Heart right ventricle (tissue), 16 donors: ENCODE measurements at regions of chr17 and their contacts with region 1.

Region 1: DNA sequence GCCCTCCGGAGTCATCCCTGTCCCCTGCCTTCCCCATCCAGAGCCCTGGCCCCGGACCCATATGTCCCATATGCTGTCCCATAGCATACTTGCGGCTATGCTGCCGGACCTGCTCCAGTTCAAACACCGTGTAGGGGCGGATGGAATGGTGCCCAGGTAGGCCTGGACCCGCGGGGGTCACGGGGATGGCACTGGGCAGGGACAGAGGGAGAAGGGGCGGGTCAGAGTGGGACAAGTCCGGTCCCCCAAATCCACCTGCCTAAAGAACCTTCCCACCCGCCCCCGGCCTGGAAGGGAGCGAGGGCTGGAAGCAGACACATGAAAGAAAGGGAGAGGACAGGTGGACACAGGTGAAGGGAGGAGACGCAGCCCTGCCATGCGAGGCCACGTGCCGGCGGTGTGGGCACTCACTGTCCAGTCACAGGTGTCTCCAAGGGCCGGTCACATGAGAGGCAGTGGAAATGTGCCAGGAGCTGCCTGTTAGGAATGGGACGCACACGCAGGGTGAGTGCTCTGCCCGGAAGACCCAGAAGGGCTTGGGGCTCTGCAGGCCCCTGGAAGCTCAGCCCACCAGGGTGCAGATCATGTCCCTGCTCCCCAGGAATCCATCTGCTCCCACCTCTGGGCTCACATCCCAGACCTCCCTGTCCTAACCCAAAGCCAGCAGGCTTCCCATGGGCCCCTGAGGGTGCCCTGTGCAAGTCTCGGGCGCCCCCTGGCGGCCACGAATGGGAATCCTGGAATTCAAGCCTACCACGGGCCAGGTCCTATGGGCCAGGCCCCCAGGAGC is 14.0 kb downstream of the UBALD2 start:
- DNase-seq: peak; percentile 86 to 90
- ATAC-seq: peak; percentile 84 to 96 (median 92)
- H3K4me3 ChIP-seq: peak overlapping the region in 1 of 10 donors; percentile 19
- H3K27ac ChIP-seq: no peak overlapping the region
- H3K4me1 ChIP-seq: peaks cover 0 to 24% (median 8%) of the 10 kb centered on the region in 9 donors
- H3K27me3 ChIP-seq: no peaks in the 10 kb centered on the region
- CTCF ChIP-seq: peak; percentile 96 to 99 (median 99)

Region 2: DNA sequence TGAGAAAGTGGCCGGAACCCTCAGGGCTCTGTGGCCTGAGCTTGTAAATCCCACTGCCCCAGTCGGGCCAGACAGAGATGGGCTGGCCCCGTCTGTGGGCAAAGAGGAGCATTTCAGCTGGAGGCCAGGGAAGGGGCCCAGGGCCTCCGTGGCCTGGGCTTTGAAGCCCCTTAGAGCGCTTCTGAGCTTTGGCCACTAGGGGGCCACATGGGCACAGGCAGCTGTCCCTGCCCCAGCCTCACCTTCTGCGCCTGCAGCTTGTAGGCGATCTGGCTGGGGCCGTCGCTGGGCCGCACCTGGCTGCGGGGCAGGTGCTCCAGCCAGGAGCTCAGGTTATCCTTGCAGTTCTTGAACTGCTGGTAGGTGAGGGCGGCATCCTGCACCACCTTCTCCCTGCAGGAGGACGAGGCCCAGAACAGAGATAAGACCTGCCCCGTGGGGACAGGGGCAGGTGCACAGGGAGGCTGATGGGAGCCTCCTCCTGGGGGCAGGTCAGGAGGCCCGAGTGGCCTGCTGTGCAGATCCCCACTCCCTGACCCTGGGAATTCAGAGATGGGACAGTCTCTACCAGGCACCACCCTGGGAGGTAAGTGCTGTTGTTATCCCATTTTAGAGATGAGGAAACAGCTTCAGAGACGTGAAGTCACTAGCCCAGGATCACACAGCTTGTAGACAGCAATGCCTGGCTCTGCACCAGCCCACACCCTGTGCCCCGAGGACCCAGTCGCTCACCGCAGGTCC is 264.8 kb before region 1 on chr17:
- intact Hi-C with region 1: loop called in 1 of 10 experiments (anchors 10 kb)
- DNase-seq: peak; percentile 54 to 68
- ATAC-seq: peak; percentile 65 to 88 (median 82)
- H3K4me3 ChIP-seq: no peak overlapping the region
- H3K27ac ChIP-seq: no peak overlapping the region
- H3K4me1 ChIP-seq: peaks cover 0 to 6% (median 4%) of the 10 kb centered on the region in 9 donors
- H3K27me3 ChIP-seq: peaks cover 0 to 12% (median 0%) of the 10 kb centered on the region in 7 donors
- CTCF ChIP-seq: peak; percentile 89 to 98 (median 95)

Region 3: GRCh38 chr17:76121932-76122430 is 157.2 kb before region 1 on chr17:
- intact Hi-C with region 1: loop called (anchors 1 to 5 kb)
- DNase-seq: peak in 1 of 2 donors; percentile 31
- ATAC-seq: peak; percentile 25 to 63 (median 42)
- H3K4me3 ChIP-seq: peak overlapping the region; percentile 25 to 55 (median 50)
- H3K27ac ChIP-seq: peak overlapping the region in 4 of 10 donors; percentile 22 to 69 (median 42)
- H3K4me1 ChIP-seq: peaks cover 0 to 14% (median 6%) of the 10 kb centered on the region in 9 donors
- H3K27me3 ChIP-seq: no peaks in the 10 kb centered on the region
- CTCF ChIP-seq: no peak

Region 4: GRCh38 chr17:76182016-76182764 is 97.0 kb before region 1 on chr17:
- intact Hi-C with region 1: loop called in 6 of 10 experiments (anchors 1 to 5 kb)
- DNase-seq: peak; percentile 85 to 89
- ATAC-seq: peak; percentile 80 to 92 (median 86)
- H3K4me3 ChIP-seq: no peak overlapping the region
- H3K27ac ChIP-seq: peak overlapping the region in 1 of 10 donors; percentile 61
- H3K4me1 ChIP-seq: peaks cover 0 to 23% (median 3%) of the 10 kb centered on the region in 9 donors
- H3K27me3 ChIP-seq: no peaks in the 10 kb centered on the region
- CTCF ChIP-seq: peak; percentile 71 to 93 (median 87)

Region 5: GRCh38 chr17:76223802-76224201 is 55.3 kb before region 1 on chr17:
- intact Hi-C with region 1: no loop called
- DNase-seq: no peak
- ATAC-seq: no peak
- H3K4me3 ChIP-seq: no peak overlapping the region
- H3K27ac ChIP-seq: no peak overlapping the region
- H3K4me1 ChIP-seq: no peaks in the 10 kb centered on the region
- H3K27me3 ChIP-seq: no peaks in the 10 kb centered on the region
- CTCF ChIP-seq: no peak

Region 6: GRCh38 chr17:76240461-76241203 is 38.5 kb before region 1 on chr17 and contains the start of gene RNF157:
- intact Hi-C with region 1: loop called in 2 of 10 experiments (anchors 5 kb)
- DNase-seq: peak; percentile 32 to 69
- ATAC-seq: peak; percentile 71 to 89 (median 86)
- H3K4me3 ChIP-seq: peak within 1 kb of the TSS; percentile 51 to 93 (median 67)
- H3K27ac ChIP-seq: peak within 1 kb of the TSS in 9 of 10 donors; percentile 4 to 75 (median 59)
- H3K4me1 ChIP-seq: peaks cover 4 to 26% (median 15%) of the 10 kb centered on the region in 9 donors
- H3K27me3 ChIP-seq: peaks cover 0 to 55% (median 0%) of the 10 kb centered on the region in 7 donors
- CTCF ChIP-seq: no peak
- total RNA-seq, gene RNF157: 1.3 to 18.8 (median 3.4) TPM

Region 7: DNA sequence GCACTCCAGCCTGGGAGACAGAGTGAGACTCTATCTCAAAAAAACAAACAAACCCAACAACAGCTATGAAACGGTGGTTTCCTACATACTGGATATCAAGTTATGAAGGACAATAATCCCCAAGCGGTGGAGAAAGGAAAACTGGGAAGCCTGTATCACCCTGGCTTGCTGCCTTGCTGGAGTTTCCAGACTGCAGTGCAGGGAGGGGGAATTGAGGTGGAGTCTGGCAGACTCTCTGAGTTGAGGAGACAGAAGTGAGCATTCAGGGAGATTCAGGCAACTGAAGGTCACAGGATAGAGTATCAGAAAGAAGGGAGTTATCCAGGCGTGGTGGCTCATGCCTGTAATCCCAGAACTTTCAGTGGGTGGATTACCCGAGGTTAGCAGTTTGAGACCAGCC is 17.0 kb after region 1 on chr17:
- intact Hi-C with region 1: no loop called
- DNase-seq: no peak
- ATAC-seq: peak in 7 of 8 donors; percentile 41 to 65 (median 49)
- H3K4me3 ChIP-seq: no peak overlapping the region
- H3K27ac ChIP-seq: peak overlapping the region in 1 of 10 donors; percentile 31
- H3K4me1 ChIP-seq: peaks cover 0 to 14% (median 6%) of the 10 kb centered on the region in 9 donors
- H3K27me3 ChIP-seq: no peaks in the 10 kb centered on the region
- CTCF ChIP-seq: no peak